Cardiac septum (tissue), 1 donor: ENCODE measurements at regions of chr12 and their contacts with region 1.

Region 1: DNA sequence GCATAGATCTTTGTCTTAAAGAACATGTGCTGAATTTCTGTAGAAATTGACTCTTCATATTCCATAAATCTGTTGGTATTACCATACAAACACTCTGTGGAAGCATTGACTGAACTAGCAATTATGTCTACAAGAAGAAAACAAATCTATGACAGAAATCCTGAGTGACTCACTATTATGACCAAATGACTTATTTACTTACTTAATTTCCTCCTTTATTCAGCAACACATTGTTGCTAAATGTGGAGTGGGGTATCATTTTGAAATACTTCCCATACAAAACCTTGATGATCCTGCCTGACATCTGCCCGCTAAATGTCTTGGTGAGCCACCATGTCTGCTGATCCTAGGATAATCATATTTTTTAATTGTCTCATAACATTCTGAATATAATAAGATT is 99.1 kb upstream of the SLCO1C1 start:
- DNase-seq: no peak

Region 2: GRCh38 chr12:20390846-20391245 is 205.2 kb before region 1 on chr12:
- intact Hi-C with region 1: no loop called
- DNase-seq: no peak

Region 3: GRCh38 chr12:20463913-20464524 is 132.0 kb before region 1 on chr12:
- intact Hi-C with region 1: loop called (anchors 10 kb)
- DNase-seq: no peak

Region 4: GRCh38 chr12:20549107-20549719 is 46.8 kb before region 1 on chr12:
- intact Hi-C with region 1: no loop called
- DNase-seq: no peak

Region 5: DNA sequence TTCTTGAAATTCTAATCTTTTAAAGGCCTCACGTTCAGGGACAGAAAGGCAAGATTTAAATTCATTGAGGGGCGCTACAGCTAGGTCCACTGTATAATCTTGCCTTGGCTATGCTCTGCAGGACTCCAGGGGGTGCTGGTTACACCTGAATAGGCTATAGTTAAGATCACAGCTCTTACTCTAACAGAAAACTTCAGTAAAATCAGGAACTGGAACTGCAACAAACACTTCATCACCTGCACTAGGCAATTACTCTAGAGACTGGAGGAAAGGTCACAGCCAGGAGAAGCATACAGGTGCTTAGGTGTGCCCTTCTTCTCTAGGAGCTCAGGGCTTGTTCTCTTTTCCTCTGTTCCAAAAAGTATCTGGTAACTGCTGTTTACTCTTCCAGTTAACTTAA is 120.0 kb after region 1 on chr12:
- intact Hi-C with region 1: no loop called
- DNase-seq: no peak